Calu3 (cell line): ENCODE measurements at regions of chr10 and their contacts with region 1.

Region 1: GRCh38 chr10:14700546-14701123 is 74.1 kb downstream of the FAM107B start:
- DNase-seq: no peak
- H3K4me3 Mint-ChIP-seq: no peak overlapping the region
- H3K27ac Mint-ChIP-seq: no peak overlapping the region
- H3K4me1 Mint-ChIP-seq: peaks cover 25% of the 10 kb centered on the region
- H3K27me3 Mint-ChIP-seq: no peaks in the 10 kb centered on the region
- CTCF ChIP-seq: no peak

Region 2: GRCh38 chr10:14439451-14440259 is 261.0 kb before region 1 on chr10:
- CTCF ChIA-PET with region 1: no interaction called
- intact Hi-C with region 1: no loop called
- DNase-seq: no peak
- H3K4me3 Mint-ChIP-seq: no peak overlapping the region
- H3K27ac Mint-ChIP-seq: no peak overlapping the region
- H3K4me1 Mint-ChIP-seq: no peaks in the 10 kb centered on the region
- H3K27me3 Mint-ChIP-seq: no peaks in the 10 kb centered on the region
- CTCF ChIP-seq: no peak

Region 3: GRCh38 chr10:14571866-14572507 is 128.6 kb before region 1 on chr10:
- CTCF ChIA-PET with region 1: no interaction called
- intact Hi-C with region 1: no loop called
- DNase-seq: peak; percentile 73
- H3K4me3 Mint-ChIP-seq: peak overlapping the region; percentile 20
- H3K27ac Mint-ChIP-seq: peak overlapping the region; percentile 83
- H3K4me1 Mint-ChIP-seq: peaks cover 34% of the 10 kb centered on the region
- H3K27me3 Mint-ChIP-seq: no peaks in the 10 kb centered on the region
- CTCF ChIP-seq: no peak

Region 4: DNA sequence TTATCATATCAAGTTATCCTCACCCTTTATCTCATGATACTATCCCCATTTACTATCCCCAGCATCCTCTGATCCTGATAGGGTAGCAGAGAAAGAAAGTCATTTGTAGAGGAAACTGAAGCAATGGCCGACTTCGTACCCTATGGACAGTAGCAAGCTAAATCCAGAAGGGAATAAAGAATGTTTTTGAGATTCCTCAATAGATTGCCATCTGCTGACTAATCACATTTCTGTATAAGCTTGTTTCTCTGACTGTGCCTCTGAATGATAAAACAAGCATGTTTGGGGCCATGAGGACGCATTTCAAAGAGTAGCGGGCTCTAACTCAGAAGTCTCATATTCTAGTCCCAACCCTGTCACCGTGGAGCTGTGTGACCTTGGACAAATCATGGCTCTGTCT is 87.3 kb after region 1 on chr10:
- CTCF ChIA-PET with region 1: interaction called, 10 read pairs
- intact Hi-C with region 1: no loop called
- DNase-seq: no peak
- H3K4me3 Mint-ChIP-seq: no peak overlapping the region
- H3K27ac Mint-ChIP-seq: no peak overlapping the region
- H3K4me1 Mint-ChIP-seq: peaks cover 2% of the 10 kb centered on the region
- H3K27me3 Mint-ChIP-seq: no peaks in the 10 kb centered on the region
- CTCF ChIP-seq: no peak